HCT116 (cell line): ENCODE measurements at regions of chr10 and their contacts with region 1.

Region 1: GRCh38 chr10:58414270-58415041 is 29.2 kb downstream of the TFAM start:
- DNase-seq: no peak
- ATAC-seq: peak; percentile 83
- H3K4me3 ChIP-seq: no peak overlapping the region
- H3K27ac ChIP-seq: no peak overlapping the region
- H3K4me1 ChIP-seq: no peaks in the 10 kb centered on the region
- H3K27me3 ChIP-seq: no peaks in the 10 kb centered on the region
- CTCF ChIP-seq: peak; percentile 38 to 50 (median 41); a peak in 5 of 6 replicates
- POLR2A ChIP-seq: no peak
- RAD21 ChIP-seq: peak; percentile 79

Region 2: GRCh38 chr10:57818522-57818921 is 595.9 kb before region 1 on chr10:
- CTCF ChIA-PET with region 1: no interaction called
- POLR2A ChIA-PET with region 1: no interaction called
- RAD21 ChIA-PET with region 1: no interaction called
- intact Hi-C with region 1: no loop called
- DNase-seq: no peak
- ATAC-seq: no peak
- H3K4me3 ChIP-seq: no peak overlapping the region
- H3K27ac ChIP-seq: no peak overlapping the region
- H3K4me1 ChIP-seq: no peaks in the 10 kb centered on the region
- H3K27me3 ChIP-seq: no peaks in the 10 kb centered on the region
- CTCF ChIP-seq: no peak
- POLR2A ChIP-seq: no peak
- RAD21 ChIP-seq: no peak

Region 3: GRCh38 chr10:58570307-58570723 is 155.9 kb after region 1 on chr10:
- CTCF ChIA-PET with region 1: no interaction called
- POLR2A ChIA-PET with region 1: no interaction called
- RAD21 ChIA-PET with region 1: no interaction called
- intact Hi-C with region 1: no loop called
- DNase-seq: no peak
- ATAC-seq: no peak
- H3K4me3 ChIP-seq: no peak overlapping the region
- H3K27ac ChIP-seq: no peak overlapping the region
- H3K4me1 ChIP-seq: no peaks in the 10 kb centered on the region
- H3K27me3 ChIP-seq: 0 out of 2 replicates have a peak, but pooled peaks cover 10% of the 10 kb centered on the region
- CTCF ChIP-seq: no peak
- POLR2A ChIP-seq: no peak
- RAD21 ChIP-seq: no peak

Region 4: DNA sequence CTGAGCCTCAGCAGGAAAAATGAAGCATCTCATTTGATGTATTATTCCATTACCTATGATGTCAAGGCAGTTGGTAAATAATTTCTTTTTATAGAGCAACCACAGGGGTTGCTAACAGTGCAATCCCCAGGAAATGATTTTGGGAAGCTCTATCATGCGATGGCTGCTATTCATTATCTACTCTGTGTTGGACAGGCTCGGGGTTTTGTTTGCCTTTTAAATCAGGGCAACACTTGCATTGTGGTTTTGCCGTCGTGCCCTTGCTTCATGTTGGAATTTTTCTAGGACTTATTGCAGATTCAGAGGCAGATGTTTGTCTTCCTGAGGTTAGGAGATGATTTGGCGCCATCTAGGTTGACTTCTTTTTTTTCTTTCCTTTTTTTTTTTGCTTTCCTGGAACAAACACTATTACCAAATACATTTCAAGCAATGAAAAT is 226.7 kb after region 1 on chr10:
- CTCF ChIA-PET with region 1: interaction called, 12 read pairs
- POLR2A ChIA-PET with region 1: no interaction called
- RAD21 ChIA-PET with region 1: no interaction called
- intact Hi-C with region 1: loop called (anchors 2 kb)
- DNase-seq: peak; percentile 18
- ATAC-seq: peak; percentile 32; the same call in 1 of the 2 replicates
- H3K4me3 ChIP-seq: no peak overlapping the region
- H3K27ac ChIP-seq: no peak overlapping the region
- H3K4me1 ChIP-seq: no peaks in the 10 kb centered on the region
- H3K27me3 ChIP-seq: peaks cover 13% of the 10 kb centered on the region; the same call in 1 of the 2 replicates
- CTCF ChIP-seq: peak in 2 of 3 experiments; percentile 29 to 42; a peak in 4 of 6 replicates
- POLR2A ChIP-seq: no peak
- RAD21 ChIP-seq: peak; percentile 56

Region 5: DNA sequence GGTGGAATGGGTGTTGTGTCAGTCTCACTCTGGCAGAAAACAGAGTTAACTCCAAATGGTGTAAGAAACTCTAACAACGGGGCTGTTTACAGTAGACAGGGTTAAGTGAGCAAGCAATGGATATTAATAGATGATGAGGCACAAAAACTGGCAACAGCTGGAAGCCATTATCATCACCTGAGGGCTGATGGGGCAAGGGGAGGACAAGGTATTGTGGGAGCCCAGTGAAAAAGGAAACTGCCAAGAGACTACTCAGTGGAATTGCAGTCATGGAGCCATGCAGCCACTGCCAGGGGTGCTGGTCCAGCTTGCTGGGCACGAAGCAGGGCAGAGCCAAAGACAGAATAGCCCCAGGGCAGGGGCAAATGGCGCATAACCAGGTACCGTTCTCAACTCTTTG is 358.9 kb after region 1 on chr10:
- CTCF ChIA-PET with region 1: interaction called, 3 read pairs
- POLR2A ChIA-PET with region 1: no interaction called
- RAD21 ChIA-PET with region 1: no interaction called
- intact Hi-C with region 1: loop called (anchors 5 kb)
- DNase-seq: no peak
- ATAC-seq: no peak
- H3K4me3 ChIP-seq: no peak overlapping the region
- H3K27ac ChIP-seq: no peak overlapping the region
- H3K4me1 ChIP-seq: no peaks in the 10 kb centered on the region
- H3K27me3 ChIP-seq: no peaks in the 10 kb centered on the region
- CTCF ChIP-seq: no peak
- POLR2A ChIP-seq: no peak
- RAD21 ChIP-seq: no peak

Region 6: GRCh38 chr10:59234816-59235429 is 820.5 kb after region 1 on chr10:
- CTCF ChIA-PET with region 1: interaction called, 3 read pairs
- POLR2A ChIA-PET with region 1: no interaction called
- RAD21 ChIA-PET with region 1: no interaction called
- intact Hi-C with region 1: loop called (anchors 10 kb)
- DNase-seq: peak; percentile 44
- ATAC-seq: peak; percentile 66
- H3K4me3 ChIP-seq: no peak overlapping the region
- H3K27ac ChIP-seq: no peak overlapping the region
- H3K4me1 ChIP-seq: no peaks in the 10 kb centered on the region; a peak in 1 of 4 replicates
- H3K27me3 ChIP-seq: no peaks in the 10 kb centered on the region
- CTCF ChIP-seq: peak; percentile 37 to 75 (median 70); a peak in 5 of 6 replicates
- POLR2A ChIP-seq: no peak
- RAD21 ChIP-seq: peak; percentile 52